ENCODE measurements at regions of chr5 and their contacts with region 1.

Region 1: DNA sequence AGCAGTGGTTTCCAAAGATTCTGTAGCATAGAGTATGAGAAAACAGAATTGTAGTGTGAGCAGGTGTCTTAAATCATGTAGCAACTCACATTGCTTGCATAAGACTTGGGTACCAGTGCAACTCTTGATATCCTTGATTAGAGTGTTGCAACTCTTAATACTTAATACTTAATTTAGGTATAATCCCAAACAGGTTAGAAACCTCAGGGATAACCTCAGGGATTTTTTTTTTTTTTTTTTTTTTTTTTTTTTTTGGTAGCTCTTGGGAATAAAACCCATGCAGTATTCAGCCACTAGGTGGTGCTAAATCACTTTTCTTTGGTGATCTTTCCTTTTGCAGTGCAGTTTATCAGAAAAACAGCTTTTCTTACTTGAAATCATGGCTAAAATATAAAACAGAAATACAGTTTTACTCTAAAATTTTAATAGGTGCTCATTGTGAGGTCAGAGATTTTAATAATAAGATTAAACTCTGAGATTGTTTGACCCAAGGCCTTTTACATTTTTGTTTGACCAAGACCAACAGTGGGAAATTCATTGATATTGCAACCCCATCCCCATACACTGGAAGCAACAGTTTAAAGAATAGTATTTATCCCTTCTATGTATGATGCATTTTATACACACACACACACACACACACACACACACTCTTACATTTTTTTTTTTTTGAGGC is 55.3 kb downstream of the ERAP1 start:
- DNase-seq: peak; percentile 71
- H3K4me3 Mint-ChIP-seq: no peak overlapping the region
- H3K27ac Mint-ChIP-seq: no peak overlapping the region
- H3K4me1 Mint-ChIP-seq: peaks cover 1% of the 10 kb centered on the region
- H3K27me3 Mint-ChIP-seq: no peaks in the 10 kb centered on the region

Region 2: DNA sequence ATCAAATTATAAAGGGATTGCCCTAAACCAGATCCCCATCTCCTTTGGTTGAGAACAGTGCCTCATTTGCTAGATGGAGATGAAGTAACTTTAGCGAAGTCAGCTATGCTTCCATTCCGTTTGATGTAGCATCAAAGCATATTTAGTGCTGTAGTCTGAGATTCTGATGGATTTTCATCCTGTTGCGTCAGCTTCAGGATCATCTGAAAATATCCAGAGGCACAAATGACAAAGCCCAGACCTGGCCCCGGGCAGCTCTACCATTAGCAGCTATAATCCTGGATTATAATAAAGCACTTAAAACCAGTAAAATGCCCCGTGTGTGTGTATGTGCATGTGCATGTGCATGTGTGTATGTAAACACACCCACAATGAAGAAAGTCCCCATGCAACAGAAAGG is 10.5 kb after region 1 on chr5:
- CTCF ChIA-PET with region 1: interaction called, 26 read pairs
- POLR2A ChIA-PET with region 1: no interaction called
- DNase-seq: no peak
- H3K4me3 Mint-ChIP-seq: no peak overlapping the region
- H3K27ac Mint-ChIP-seq: no peak overlapping the region
- H3K4me1 Mint-ChIP-seq: no peaks in the 10 kb centered on the region
- H3K27me3 Mint-ChIP-seq: no peaks in the 10 kb centered on the region